SK-N-SH (cell line): ENCODE measurements at regions of chr16 and their contacts with region 1.

Region 1: DNA sequence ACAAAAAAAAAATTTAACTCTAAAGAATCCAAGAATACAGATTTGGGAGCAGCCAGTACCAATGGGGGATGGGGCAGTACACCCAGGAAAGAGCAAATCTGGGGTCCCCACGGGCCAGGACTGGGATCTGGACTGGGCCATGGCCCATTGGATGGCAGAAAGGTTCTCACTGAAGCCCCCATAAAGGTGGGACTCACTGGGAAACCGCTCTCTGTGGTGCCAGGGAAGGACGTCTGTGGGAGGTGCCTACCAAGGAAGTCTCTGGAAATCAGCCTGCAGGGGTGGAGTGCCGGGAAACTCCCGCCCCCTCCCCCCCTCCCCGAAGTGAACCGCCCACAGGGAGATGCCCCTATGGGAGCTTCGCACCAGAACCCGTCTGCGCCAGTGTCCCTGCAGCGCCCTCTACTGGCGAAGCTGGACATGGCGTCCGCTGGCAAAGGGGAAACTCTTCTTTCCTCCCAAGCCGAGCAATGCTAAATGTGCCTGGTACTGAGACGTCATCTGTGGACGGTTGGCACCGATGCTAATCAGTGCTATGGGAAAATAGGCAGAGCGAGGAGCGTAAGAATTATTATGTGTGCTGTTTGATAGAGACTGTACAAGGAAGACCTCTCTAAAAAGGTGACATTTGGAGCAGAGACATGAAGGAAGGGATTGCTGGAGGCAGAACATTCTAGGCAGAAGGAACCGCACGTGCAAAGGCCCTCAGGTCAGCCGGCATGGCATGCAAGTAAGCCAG is 671.1 kb downstream of the WWOX start:
- DNase-seq: peak; percentile 81
- H3K4me3 ChIP-seq: no peak overlapping the region
- H3K27ac ChIP-seq: no peak overlapping the region
- H3K4me1 ChIP-seq: no peaks in the 10 kb centered on the region; a peak in 1 of 4 replicates
- H3K27me3 ChIP-seq: no peaks in the 10 kb centered on the region
- CTCF ChIP-seq: peak; percentile 32
- EP300 ChIP-seq: no peak
- RAD21 ChIP-seq: peak; percentile 73

Region 2: GRCh38 chr16:78503602-78504001 is 266.9 kb before region 1 on chr16:
- CTCF ChIA-PET with region 1: interaction called, 37 read pairs
- POLR2A ChIA-PET with region 1: no interaction called
- DNase-seq: peak; percentile 42
- H3K4me3 ChIP-seq: no peak overlapping the region; a peak in 1 of 4 replicates
- H3K27ac ChIP-seq: no peak overlapping the region
- H3K4me1 ChIP-seq: no peaks in the 10 kb centered on the region; a peak in 1 of 4 replicates
- H3K27me3 ChIP-seq: no peaks in the 10 kb centered on the region
- CTCF ChIP-seq: peak; percentile 61
- EP300 ChIP-seq: no peak
- RAD21 ChIP-seq: peak; percentile 78

Region 3: DNA sequence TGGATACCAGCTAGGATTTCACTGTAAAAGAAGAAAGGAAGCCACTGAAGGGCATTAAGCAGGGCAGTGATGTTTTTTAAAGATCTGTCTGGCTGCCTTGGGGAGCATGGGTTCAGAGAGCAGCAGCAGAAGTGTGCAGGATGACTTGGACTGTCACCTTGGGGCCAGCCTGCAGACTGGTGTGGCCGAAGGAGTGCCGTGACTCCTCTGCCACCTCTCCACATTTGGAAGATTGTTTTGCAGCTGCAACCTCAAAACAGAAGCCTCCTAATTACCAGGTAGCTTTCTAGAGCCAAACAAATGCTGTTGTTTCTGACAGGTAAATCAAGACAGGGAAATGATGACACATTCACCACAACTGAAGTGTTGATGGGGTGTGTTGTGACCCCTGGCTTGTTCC is 10.3 kb after region 1 on chr16:
- CTCF ChIA-PET with region 1: interaction called, 22 read pairs
- POLR2A ChIA-PET with region 1: no interaction called
- DNase-seq: no peak
- H3K4me3 ChIP-seq: no peak overlapping the region
- H3K27ac ChIP-seq: no peak overlapping the region
- H3K4me1 ChIP-seq: no peaks in the 10 kb centered on the region
- H3K27me3 ChIP-seq: no peaks in the 10 kb centered on the region
- CTCF ChIP-seq: no peak
- EP300 ChIP-seq: no peak
- RAD21 ChIP-seq: no peak